GM12878 (cell line): ENCODE measurements at regions of chr12 and their contacts with region 1.

Region 1: GRCh38 chr12:68538726-68539614 is 71.7 kb upstream of the RAP1B start:
- DNase-seq: peak; percentile 59
- ATAC-seq: peak; percentile 96
- H3K4me3 ChIP-seq: no peak overlapping the region
- H3K27ac ChIP-seq: no peak overlapping the region
- H3K4me1 ChIP-seq: peaks cover 3% of the 10 kb centered on the region; the same call in 1 of the 2 replicates
- H3K27me3 ChIP-seq: no peaks in the 10 kb centered on the region
- CTCF ChIP-seq: no peak
- EP300 ChIP-seq: peak in 1 of 2 experiments; percentile 77; a peak in 1 of 4 replicates
- POLR2A ChIP-seq: no peak
- RAD21 ChIP-seq: no peak

Region 2: DNA sequence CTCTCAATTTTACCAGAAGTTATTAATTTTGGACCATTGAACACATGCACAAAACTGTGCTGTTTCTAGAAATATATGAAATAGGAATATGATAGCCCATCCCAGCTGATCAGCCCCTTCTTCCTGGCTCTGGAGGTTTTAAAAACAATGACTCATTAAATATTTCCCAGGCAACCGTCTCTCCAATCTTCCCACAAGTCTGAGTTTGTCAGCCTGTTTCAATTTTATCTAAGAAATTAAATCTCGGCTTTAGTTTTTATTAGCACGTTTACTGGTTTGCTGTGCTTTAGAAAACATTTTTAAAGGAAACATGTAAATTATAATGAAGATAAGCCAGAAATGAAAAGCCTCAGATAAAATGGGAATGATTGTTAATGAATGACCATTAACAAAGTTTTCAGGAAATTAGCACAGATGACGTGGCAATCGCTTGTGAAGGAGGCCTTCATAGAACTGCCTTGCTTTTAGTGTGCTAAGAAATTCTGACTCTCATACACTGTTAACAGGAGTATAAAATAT is 17.6 kb before region 1 on chr12:
- CTCF ChIA-PET with region 1: no interaction called
- POLR2A ChIA-PET with region 1: no interaction called
- RAD21 ChIA-PET with region 1: no interaction called
- SMC1A ChIA-PET with region 1: interaction called, 14 read pairs
- in situ Hi-C with region 1: no loop called
- intact Hi-C with region 1: no loop called
- DNase-seq: no peak
- ATAC-seq: no peak
- H3K4me3 ChIP-seq: no peak overlapping the region
- H3K27ac ChIP-seq: no peak overlapping the region
- H3K4me1 ChIP-seq: no peaks in the 10 kb centered on the region
- H3K27me3 ChIP-seq: no peaks in the 10 kb centered on the region
- CTCF ChIP-seq: no peak
- EP300 ChIP-seq: no peak
- POLR2A ChIP-seq: no peak
- RAD21 ChIP-seq: no peak